CD8-positive, alpha-beta T cell (primary cell): ENCODE measurements at regions of chr1 and their contacts with region 1.

Region 1: DNA sequence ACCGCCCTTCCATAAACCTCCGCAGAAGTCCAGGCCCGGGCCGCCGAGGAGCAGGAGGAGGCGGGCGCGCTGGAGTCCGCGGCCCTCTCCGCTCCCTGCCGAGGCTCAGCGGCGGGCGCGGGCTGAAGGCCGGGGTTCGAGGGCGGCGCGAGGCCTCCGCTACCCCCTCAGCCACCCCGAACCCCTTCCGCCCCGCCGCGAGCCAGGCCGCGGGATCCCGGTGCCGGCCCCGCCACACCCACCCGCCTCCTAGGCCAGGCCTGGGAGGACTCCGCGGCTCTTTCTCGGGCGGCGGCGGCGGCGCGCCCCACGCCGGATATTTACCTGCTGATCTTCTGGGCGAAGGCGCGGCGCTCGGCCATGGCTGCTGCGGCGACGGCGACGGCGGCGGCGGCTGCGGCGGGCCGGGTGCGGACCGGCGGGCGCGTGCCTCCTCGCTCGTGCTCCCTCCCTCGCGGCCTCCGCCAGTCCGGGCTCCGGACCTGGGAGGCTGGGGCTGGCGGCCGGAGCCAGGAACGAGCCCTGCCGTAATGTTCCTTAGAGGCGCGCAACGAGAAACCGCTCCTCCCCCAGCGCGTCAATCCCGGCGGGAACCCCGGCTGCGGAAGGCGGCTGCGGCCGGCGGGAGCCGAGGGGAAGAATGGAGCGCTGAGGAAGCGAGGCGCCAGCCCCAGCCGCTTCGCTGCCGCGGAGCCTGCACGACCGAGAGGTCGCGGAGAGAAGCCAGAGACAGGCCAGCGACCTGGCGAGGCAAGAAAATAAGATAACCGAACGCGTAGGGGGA is at the start of gene DOCK7:
- DNase-seq: peak; percentile 11 to 76 (median 50)
- ATAC-seq: peak; percentile 63
- H3K4me3 ChIP-seq: peak within 1 kb of the TSS; percentile 60 to 71
- H3K4me3 Mint-ChIP-seq: peak within 1 kb of the TSS; percentile 98
- H3K27ac ChIP-seq: peak within 1 kb of the TSS; percentile 26 to 36
- H3K27ac Mint-ChIP-seq: peak within 1 kb of the TSS; percentile 94
- H3K4me1 ChIP-seq: no peaks in the 10 kb centered on the region
- H3K4me1 Mint-ChIP-seq: peaks cover 28% of the 10 kb centered on the region
- H3K27me3 ChIP-seq: no peaks in the 10 kb centered on the region
- H3K27me3 Mint-ChIP-seq: peaks cover 6% of the 10 kb centered on the region
- CTCF ChIP-seq: no peak
- total RNA-seq, gene DOCK7: 3.9 to 7.4 TPM

Region 2: DNA sequence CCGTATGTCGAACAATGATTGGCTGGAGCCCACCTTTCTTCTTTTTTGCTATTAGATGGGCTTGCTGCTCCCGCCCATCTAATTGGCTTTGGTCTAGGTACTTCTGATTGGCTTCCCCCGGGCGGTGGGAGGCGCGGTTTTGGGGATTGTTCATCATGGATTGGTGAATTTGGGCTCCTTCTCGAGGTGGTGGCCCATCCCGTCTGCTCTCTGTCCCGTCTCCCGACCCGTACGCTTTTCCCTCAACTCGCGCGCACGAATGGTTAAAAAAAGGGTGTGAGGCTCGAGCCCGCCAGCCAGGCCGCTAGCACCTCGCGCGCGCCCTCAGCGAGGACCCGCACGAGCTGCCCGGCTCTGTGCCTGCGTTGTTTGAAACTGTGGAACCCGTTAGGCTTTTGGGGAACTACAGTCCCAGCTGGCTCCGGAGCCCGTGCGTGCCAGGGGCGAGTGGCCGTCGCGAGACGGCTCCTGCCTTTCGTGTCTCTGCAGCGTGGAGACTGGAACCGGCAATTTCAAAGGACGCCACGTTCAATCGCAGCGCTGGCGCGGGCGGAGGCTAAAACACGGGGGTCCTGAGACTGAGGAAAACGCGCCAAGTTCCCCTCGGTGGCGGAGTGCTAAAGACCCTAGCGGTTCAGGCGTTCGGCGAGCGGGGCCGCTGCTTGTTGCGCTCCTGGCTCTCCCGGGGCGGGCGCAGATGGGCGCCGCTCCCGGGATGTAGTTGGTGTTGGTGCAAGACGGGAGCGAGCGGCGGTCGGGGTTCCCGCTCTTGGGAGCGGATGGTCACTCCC is 251.4 kb before region 1 on chr1 and contains the start of gene USP1:
- CTCF ChIA-PET with region 1: no interaction called
- POLR2A ChIA-PET with region 1: no interaction called
- intact Hi-C with region 1: loop called (anchors 5 to 10 kb)
- DNase-seq: peak; percentile 94 to 100 (median 96)
- ATAC-seq: peak; percentile 82
- H3K4me3 ChIP-seq: peak within 1 kb of the TSS; percentile 90 to 97
- H3K4me3 Mint-ChIP-seq: peak within 1 kb of the TSS; percentile 98
- H3K27ac ChIP-seq: peak within 1 kb of the TSS; percentile 96 to 98
- H3K27ac Mint-ChIP-seq: peak within 1 kb of the TSS; percentile 100
- H3K4me1 ChIP-seq: peaks cover 33% of the 10 kb centered on the region
- H3K4me1 Mint-ChIP-seq: peaks cover 40% of the 10 kb centered on the region
- H3K27me3 ChIP-seq: no peaks in the 10 kb centered on the region
- H3K27me3 Mint-ChIP-seq: no peaks in the 10 kb centered on the region
- CTCF ChIP-seq: no peak
- total RNA-seq, gene USP1: 23.1 to 23.7 TPM

Region 3: GRCh38 chr1:62467092-62467491 is 221.0 kb before region 1 on chr1:
- CTCF ChIA-PET with region 1: no interaction called
- POLR2A ChIA-PET with region 1: no interaction called
- intact Hi-C with region 1: no loop called
- DNase-seq: no peak
- ATAC-seq: no peak
- H3K4me3 ChIP-seq: no peak overlapping the region
- H3K4me3 Mint-ChIP-seq: no peak overlapping the region
- H3K27ac ChIP-seq: no peak overlapping the region
- H3K27ac Mint-ChIP-seq: no peak overlapping the region
- H3K4me1 ChIP-seq: no peaks in the 10 kb centered on the region
- H3K4me1 Mint-ChIP-seq: no peaks in the 10 kb centered on the region
- H3K27me3 ChIP-seq: no peaks in the 10 kb centered on the region
- H3K27me3 Mint-ChIP-seq: no peaks in the 10 kb centered on the region
- CTCF ChIP-seq: no peak

Region 4: DNA sequence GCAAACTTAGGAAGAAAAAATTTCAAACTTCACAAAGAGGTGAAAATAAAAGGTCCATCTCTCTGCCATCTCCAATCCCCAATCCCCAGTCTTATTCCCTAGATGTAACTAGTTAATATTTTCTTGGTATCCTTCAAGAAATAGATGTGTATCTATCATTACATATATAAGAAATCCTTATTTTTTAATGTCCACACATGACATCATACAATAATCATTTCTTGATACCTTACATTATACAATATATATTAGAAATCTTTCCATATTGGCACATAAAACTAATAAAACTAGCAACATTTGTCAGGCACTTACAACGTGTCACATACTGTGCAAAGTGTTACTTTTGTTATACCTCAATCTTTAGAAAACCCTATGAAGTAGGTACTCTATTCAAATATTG is 16.1 kb before region 1 on chr1:
- CTCF ChIA-PET with region 1: no interaction called
- POLR2A ChIA-PET with region 1: no interaction called
- intact Hi-C with region 1: no loop called
- DNase-seq: no peak
- ATAC-seq: no peak
- H3K4me3 ChIP-seq: no peak overlapping the region
- H3K4me3 Mint-ChIP-seq: no peak overlapping the region
- H3K27ac ChIP-seq: no peak overlapping the region
- H3K27ac Mint-ChIP-seq: no peak overlapping the region
- H3K4me1 ChIP-seq: no peaks in the 10 kb centered on the region
- H3K4me1 Mint-ChIP-seq: no peaks in the 10 kb centered on the region
- H3K27me3 ChIP-seq: no peaks in the 10 kb centered on the region
- H3K27me3 Mint-ChIP-seq: no peaks in the 10 kb centered on the region
- CTCF ChIP-seq: no peak